Activated CD8-positive, alpha-beta T cell treated with anti-CD3 and anti-CD28 coated beads for 36 hours (primary cell): ENCODE measurements at regions of chr19 and their contacts with region 1.

Region 1: GRCh38 chr19:48468775-48469288 is 337 bp upstream of the CYTH2 start:
- DNase-seq: peak; percentile 100
- ATAC-seq: peak; percentile 94
- H3K4me3 Mint-ChIP-seq: peak overlapping the region; percentile 83
- H3K27ac Mint-ChIP-seq: peak overlapping the region; percentile 83
- H3K4me1 Mint-ChIP-seq: peaks cover 17% of the 10 kb centered on the region
- H3K27me3 Mint-ChIP-seq: no peaks in the 10 kb centered on the region
- CTCF ChIP-seq: no peak

Region 2: GRCh38 chr19:48363810-48364563 is 104.8 kb before region 1 on chr19 and contains the starts of genes SYNGR4 and TMEM143:
- CTCF ChIA-PET with region 1: no interaction called
- POLR2A ChIA-PET with region 1: no interaction called
- intact Hi-C with region 1: loop called (anchors 10 kb)
- DNase-seq: peak; percentile 97
- ATAC-seq: peak; percentile 91
- H3K4me3 Mint-ChIP-seq: peak within 1 kb of the TSS; percentile 86
- H3K27ac Mint-ChIP-seq: peak within 1 kb of the TSS; percentile 96
- H3K4me1 Mint-ChIP-seq: peaks cover 10% of the 10 kb centered on the region
- H3K27me3 Mint-ChIP-seq: no peaks in the 10 kb centered on the region
- CTCF ChIP-seq: no peak
- total RNA-seq, gene SYNGR4: 0.38 TPM in 1 of 2 experiments, not detected in the other
- total RNA-seq, gene TMEM143: 19.4 to 21.7 TPM